ENCODE measurements at regions of chr7 and their contacts with region 1.

Region 1: GRCh38 chr7:134605973-134606923 is 40.4 kb upstream of the BPGM start:
- DNase-seq: peak; percentile 71
- H3K4me3 Mint-ChIP-seq: peak overlapping the region; percentile 31
- H3K27ac Mint-ChIP-seq: peak overlapping the region; percentile 19
- H3K4me1 Mint-ChIP-seq: peaks cover 32% of the 10 kb centered on the region
- H3K27me3 Mint-ChIP-seq: peaks cover 19% of the 10 kb centered on the region
- CTCF ChIP-seq: peak; percentile 81

Region 2: GRCh38 chr7:134514663-134515062 is 91.6 kb before region 1 on chr7:
- CTCF ChIA-PET with region 1: interaction called, 7 read pairs
- intact Hi-C with region 1: loop called (anchors 1 kb)
- DNase-seq: peak; percentile 66
- H3K4me3 Mint-ChIP-seq: no peak overlapping the region
- H3K27ac Mint-ChIP-seq: no peak overlapping the region
- H3K4me1 Mint-ChIP-seq: peaks cover 40% of the 10 kb centered on the region
- H3K27me3 Mint-ChIP-seq: no peaks in the 10 kb centered on the region
- CTCF ChIP-seq: peak; percentile 71

Region 3: GRCh38 chr7:134520130-134520529 is 86.1 kb before region 1 on chr7:
- CTCF ChIA-PET with region 1: interaction called, 4 read pairs
- intact Hi-C with region 1: loop called (anchors 1 kb)
- DNase-seq: no peak
- H3K4me3 Mint-ChIP-seq: no peak overlapping the region
- H3K27ac Mint-ChIP-seq: no peak overlapping the region
- H3K4me1 Mint-ChIP-seq: peaks cover 37% of the 10 kb centered on the region
- H3K27me3 Mint-ChIP-seq: no peaks in the 10 kb centered on the region
- CTCF ChIP-seq: peak; percentile 6

Region 4: DNA sequence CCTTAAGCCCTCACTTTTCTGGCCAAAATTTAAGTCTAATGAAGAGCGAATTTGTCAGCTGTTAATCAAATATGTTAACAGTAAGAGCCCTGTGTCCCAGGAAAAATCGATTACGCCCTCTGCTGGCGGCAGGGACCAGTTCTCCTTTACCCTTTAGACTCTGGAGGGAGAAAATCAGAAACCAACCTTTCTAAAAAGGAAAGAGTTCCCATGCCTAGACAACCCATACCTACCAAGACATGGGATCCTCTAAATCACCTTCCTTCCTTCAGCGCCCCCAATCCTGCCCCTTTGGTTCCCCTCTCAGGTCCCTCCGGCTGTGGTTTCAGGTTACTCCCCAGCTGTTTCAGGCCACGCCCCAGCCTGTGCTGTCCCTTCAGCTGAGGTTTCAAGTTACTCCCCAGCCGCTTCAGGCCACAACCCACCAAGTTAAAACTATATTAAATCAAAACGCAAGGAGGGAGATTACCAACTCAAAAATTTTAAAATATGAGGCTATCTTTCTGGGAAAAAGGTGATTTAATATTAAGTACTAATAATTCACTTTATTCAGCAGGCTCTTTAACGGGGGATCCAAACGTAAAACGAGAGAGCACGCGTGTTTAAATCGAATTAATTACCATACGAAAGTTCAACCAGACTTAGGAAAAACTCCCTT is 58.7 kb before region 1 on chr7:
- CTCF ChIA-PET with region 1: interaction called, 10 read pairs
- intact Hi-C with region 1: loop called (anchors 1 kb)
- DNase-seq: peak; percentile 83
- H3K4me3 Mint-ChIP-seq: peak overlapping the region; percentile 64
- H3K27ac Mint-ChIP-seq: peak overlapping the region; percentile 54
- H3K4me1 Mint-ChIP-seq: peaks cover 24% of the 10 kb centered on the region
- H3K27me3 Mint-ChIP-seq: no peaks in the 10 kb centered on the region
- CTCF ChIP-seq: peak; percentile 92

Region 5: DNA sequence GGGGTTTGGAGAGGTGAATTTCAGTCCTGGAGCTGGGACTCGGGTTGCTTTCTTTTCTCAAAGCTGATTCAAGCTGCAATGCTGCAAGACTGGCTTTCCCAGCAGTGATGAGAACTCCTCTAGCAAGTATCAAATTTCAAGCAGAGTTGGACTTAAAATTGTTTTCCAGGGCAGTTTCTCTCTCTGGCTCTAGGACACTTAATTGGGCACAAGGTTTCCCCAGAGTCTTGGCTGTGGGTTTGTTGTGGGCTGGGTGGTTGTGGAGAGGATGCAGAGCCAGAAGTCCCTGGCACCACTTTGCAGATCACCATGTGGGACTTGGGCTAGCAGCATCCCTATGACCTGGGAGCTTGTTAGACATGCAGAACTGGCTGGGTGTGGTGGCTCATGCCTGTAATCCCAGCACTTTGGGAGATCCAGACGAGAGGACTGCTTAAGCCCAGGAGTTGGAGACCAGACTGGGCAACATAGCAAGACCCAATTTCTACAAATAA is 40.6 kb before region 1 on chr7:
- CTCF ChIA-PET with region 1: no interaction called
- intact Hi-C with region 1: loop called (anchors 2 kb)
- DNase-seq: no peak
- H3K4me3 Mint-ChIP-seq: no peak overlapping the region
- H3K27ac Mint-ChIP-seq: no peak overlapping the region
- H3K4me1 Mint-ChIP-seq: peaks cover 30% of the 10 kb centered on the region
- H3K27me3 Mint-ChIP-seq: no peaks in the 10 kb centered on the region
- CTCF ChIP-seq: no peak

Region 6: GRCh38 chr7:134646425-134647305 is 40.4 kb after region 1 on chr7 and contains the start of gene BPGM:
- CTCF ChIA-PET with region 1: interaction called, 11 read pairs
- intact Hi-C with region 1: no loop called
- DNase-seq: peak; percentile 98
- H3K4me3 Mint-ChIP-seq: no peak within 1 kb of the TSS
- H3K27ac Mint-ChIP-seq: no peak within 1 kb of the TSS
- H3K4me1 Mint-ChIP-seq: peaks cover 37% of the 10 kb centered on the region
- H3K27me3 Mint-ChIP-seq: no peaks in the 10 kb centered on the region
- CTCF ChIP-seq: no peak
- total RNA-seq, gene BPGM: 23.3 and 32.5 TPM in 2 replicates